ENCODE measurements at regions of chr4 and their contacts with region 1.

Region 1: DNA sequence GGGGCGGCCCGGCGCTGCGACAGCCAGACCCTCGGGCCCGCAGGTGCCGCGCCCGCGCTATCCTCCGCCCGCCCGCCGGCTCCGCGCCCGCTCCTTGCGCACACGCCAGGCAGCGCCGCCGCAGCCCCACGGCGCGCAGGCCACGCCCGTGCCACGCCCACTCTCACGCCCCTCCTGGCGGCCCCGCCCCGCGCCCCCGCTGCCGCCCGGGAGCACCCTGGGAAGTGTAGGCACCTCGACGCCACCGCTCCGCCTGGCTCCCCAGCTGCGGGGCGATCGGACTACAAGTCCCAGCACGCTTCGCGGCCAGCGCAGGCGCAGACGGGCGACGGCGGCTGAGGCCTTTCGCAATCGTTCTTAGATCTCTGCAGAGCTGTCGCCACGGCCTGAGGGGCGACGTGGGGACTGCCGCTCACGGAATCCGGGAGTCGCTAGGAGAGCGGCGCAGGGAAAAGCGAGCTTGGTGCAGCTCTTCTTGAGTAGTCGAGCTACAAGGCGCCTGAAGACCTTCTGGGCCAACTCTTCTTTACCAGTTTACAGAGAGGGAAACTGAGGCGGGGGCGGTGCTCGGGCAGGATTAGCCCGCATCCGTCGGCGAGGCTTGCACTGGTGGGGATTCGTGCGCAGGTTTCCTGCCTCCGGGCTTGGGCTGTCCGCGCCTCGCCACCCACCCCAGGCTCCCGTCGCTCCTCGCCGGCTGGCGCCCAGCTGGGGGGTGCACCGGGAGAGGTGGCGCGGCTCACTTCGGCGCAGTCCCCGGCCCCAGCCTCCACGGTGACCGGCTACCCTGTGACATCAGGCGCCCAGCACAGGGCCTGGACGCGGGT is at the start of gene ABLIM2:
- DNase-seq: peak; percentile 100
- ATAC-seq: peak; percentile 95
- H3K4me3 Mint-ChIP-seq: peak within 1 kb of the TSS; percentile 93
- H3K27ac Mint-ChIP-seq: peak within 1 kb of the TSS; percentile 83
- H3K4me1 Mint-ChIP-seq: peaks cover 52% of the 10 kb centered on the region
- H3K27me3 Mint-ChIP-seq: peaks cover 8% of the 10 kb centered on the region
- CTCF ChIP-seq: no peak
- total RNA-seq, gene ABLIM2: 5.2 and 7.0 TPM in 2 replicates

Region 2: GRCh38 chr4:8192748-8193738 is 34.1 kb after region 1 on chr4:
- CTCF ChIA-PET with region 1: interaction called, 7 read pairs
- POLR2A ChIA-PET with region 1: interaction called, 87 read pairs
- intact Hi-C with region 1: loop called (anchors 1 kb)
- DNase-seq: peak; percentile 52
- ATAC-seq: peak; percentile 99
- H3K4me3 Mint-ChIP-seq: peak overlapping the region; percentile 20
- H3K27ac Mint-ChIP-seq: peak overlapping the region; percentile 69
- H3K4me1 Mint-ChIP-seq: peaks cover 36% of the 10 kb centered on the region
- H3K27me3 Mint-ChIP-seq: peaks cover 2% of the 10 kb centered on the region
- CTCF ChIP-seq: no peak

Region 3: DNA sequence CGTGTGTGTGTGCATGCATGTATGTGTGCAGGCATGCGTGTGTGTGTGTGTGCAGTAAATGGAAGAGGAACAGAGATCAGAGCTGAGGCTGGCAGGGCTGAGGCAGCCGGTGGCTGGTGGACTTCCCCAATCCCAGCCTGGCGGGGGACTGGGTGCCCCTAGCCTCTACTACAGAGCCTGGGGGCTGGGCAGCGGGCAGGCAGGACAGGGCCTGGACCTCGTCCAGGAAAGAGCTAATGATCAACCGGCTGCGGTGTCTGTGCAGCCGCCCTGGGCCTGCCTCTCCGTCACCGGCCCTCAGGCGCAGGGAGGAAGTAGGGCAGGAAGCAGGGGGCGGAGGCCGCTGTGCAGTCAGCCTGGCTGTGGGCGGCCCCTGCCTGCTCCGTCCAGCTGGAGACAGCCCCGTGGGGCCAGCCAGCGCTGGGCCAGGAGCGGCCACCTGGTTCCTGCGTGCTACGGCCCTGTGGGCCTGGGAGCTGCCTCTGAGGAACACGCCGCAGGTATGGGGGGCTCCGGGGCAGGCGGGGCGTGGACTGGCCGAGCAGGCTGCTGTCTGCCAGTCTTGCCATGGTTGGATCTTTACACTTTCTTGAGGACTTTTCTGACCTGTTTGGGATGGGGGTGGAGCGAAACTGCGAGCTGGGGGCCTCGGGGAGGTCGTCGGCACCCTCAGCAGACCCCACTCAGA is 40.1 kb after region 1 on chr4 and contains the start of gene SH3TC1:
- CTCF ChIA-PET with region 1: no interaction called
- POLR2A ChIA-PET with region 1: interaction called, 87 read pairs
- intact Hi-C with region 1: loop called (anchors 1 kb)
- DNase-seq: peak; percentile 78
- ATAC-seq: peak; percentile 67
- H3K4me3 Mint-ChIP-seq: peak within 1 kb of the TSS; percentile 97
- H3K27ac Mint-ChIP-seq: peak within 1 kb of the TSS; percentile 96
- H3K4me1 Mint-ChIP-seq: peaks cover 63% of the 10 kb centered on the region
- H3K27me3 Mint-ChIP-seq: no peaks in the 10 kb centered on the region
- CTCF ChIP-seq: no peak
- total RNA-seq, gene SH3TC1: 104 and 135 TPM in 2 replicates

Region 4: DNA sequence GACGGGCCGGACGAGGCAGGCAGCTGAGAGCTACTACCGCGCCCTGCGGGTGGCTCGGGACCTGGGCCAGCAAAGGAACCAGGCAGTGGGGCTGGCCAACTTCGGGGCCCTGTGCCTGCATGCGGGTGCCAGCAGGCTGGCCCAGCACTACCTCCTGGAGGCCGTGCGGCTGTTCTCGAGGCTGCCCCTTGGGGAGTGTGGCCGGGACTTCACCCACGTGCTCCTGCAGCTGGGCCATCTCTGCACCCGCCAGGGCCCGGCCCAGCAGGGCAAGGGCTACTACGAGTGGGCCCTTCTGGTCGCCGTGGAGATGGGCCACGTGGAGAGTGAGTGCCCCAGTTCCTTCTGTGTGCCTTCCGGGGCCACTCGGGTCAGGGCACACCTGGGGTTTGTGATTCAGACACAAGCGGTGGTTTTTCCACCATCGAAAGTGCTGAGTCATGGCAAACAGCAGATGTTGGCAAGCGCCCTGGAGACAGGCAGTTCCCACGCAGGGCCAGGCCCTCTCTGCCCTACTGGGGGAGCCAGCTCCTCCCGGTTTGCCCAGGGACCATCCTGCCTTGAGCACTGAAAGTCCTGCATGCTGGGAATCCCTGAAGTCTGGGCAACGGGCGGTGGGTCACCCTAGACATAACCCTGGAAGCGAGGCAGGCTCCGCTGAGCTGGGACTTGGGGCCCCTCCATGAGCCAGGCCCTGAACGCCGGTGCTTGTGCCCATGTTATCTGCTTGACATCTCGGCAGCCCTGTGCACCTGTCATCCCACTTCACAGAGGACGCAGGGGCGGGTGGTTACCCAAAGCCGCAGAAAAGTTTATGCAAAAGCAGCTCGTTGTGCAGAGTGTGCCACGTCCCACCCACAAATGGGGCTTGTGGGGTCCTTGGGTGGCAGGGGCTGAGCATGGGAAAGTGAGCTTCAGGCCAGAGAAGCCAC is 69.7 kb after region 1 on chr4:
- CTCF ChIA-PET with region 1: no interaction called
- POLR2A ChIA-PET with region 1: interaction called, 19 read pairs
- intact Hi-C with region 1: loop called (anchors 2 kb)
- DNase-seq: peak; percentile 70
- ATAC-seq: peak; percentile 74
- H3K4me3 Mint-ChIP-seq: peak overlapping the region; percentile 67
- H3K27ac Mint-ChIP-seq: peak overlapping the region; percentile 89
- H3K4me1 Mint-ChIP-seq: peaks cover 45% of the 10 kb centered on the region
- H3K27me3 Mint-ChIP-seq: no peaks in the 10 kb centered on the region
- CTCF ChIP-seq: no peak

Region 5: DNA sequence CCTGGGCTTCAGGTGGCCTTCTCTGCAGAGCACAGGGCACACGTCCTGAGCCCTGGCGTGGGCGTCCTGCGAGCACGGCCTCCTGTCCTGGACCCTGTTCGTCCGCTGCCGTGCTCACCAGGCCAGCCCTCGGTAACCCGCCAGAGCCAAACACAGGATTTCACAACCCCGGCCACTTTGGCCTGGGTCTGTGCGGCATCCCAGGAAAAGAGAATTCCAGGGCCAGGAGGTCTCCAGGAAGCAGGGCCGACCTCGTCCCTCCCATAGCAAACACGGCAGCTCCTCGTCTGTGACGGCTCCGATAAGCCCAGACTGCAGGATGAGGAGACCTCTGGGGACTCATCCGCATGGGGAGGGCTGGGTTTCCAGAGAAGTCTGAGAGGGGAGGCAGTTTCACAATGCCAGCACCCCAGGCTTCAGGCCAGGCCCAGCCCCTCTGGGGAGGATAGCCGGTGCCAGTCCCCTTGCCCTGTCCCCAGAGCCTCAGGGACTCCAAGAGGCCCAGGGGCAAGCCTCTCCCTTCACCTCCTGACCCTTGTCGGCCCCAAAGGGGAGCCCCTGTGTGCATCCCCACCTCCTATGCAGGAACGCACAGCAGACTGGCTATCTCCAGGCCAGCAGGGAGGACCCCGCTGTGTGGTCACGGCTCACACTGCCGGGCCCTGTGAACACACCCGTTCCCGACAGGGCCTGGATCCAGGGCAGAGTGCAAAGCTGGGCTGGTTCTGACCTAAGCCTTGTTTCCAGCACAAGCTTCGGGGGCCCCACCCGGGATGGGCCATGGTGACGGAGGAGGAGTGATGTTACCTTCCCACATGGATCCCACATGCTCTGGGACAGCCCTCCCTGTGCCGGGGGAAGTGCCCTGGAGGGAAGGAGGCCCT is 88.4 kb after region 1 on chr4:
- CTCF ChIA-PET with region 1: no interaction called
- POLR2A ChIA-PET with region 1: no interaction called
- intact Hi-C with region 1: no loop called
- DNase-seq: no peak
- ATAC-seq: no peak
- H3K4me3 Mint-ChIP-seq: no peak overlapping the region
- H3K27ac Mint-ChIP-seq: no peak overlapping the region
- H3K4me1 Mint-ChIP-seq: peaks cover under 1% of the 10 kb centered on the region
- H3K27me3 Mint-ChIP-seq: no peaks in the 10 kb centered on the region
- CTCF ChIP-seq: no peak

Region 6: DNA sequence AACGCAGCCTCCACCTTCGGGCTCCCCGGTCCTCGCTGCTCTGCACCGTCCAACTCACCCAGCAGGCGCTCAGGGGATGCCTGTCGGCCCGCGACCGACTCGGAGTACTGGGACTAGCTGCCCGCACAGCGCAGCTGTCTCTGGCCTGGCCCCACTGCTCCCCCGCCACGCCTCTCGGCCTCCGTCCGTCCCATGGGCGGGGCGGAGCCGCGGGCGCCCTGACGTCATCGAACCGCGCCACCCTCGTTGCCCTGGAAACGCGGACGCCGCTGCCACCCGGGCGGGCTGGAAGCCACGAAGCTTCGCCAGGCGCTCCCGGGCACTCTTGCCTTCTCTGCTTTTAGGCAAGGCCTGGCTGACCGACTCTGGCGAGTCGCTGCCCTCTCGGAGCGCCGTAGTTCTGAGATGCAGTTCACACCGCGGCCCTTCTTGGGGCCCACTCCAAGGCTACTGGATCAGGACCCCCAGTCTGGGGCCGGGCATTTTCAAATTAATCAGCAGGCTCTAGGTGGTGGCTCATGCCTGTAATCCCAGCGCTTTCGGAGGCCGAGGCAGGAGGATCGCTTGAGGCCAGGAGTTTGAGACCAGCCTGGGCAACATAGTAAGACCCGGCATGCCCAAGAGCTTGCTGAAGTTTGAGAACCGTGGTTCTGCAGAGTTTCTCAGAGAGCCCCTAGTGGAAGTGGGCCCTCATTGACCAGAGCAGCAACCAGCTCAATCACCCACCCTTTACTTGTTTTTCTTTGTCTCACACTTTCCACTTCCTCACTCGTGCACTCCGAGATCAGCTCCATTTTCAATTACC is 269.6 kb after region 1 on chr4:
- CTCF ChIA-PET with region 1: no interaction called
- POLR2A ChIA-PET with region 1: interaction called, 3 read pairs
- intact Hi-C with region 1: loop called (anchors 2 kb)
- DNase-seq: peak; percentile 98
- ATAC-seq: peak; percentile 95
- H3K4me3 Mint-ChIP-seq: peak overlapping the region; percentile 95
- H3K27ac Mint-ChIP-seq: peak overlapping the region; percentile 93
- H3K4me1 Mint-ChIP-seq: peaks cover 32% of the 10 kb centered on the region
- H3K27me3 Mint-ChIP-seq: no peaks in the 10 kb centered on the region
- CTCF ChIP-seq: no peak

Region 7: DNA sequence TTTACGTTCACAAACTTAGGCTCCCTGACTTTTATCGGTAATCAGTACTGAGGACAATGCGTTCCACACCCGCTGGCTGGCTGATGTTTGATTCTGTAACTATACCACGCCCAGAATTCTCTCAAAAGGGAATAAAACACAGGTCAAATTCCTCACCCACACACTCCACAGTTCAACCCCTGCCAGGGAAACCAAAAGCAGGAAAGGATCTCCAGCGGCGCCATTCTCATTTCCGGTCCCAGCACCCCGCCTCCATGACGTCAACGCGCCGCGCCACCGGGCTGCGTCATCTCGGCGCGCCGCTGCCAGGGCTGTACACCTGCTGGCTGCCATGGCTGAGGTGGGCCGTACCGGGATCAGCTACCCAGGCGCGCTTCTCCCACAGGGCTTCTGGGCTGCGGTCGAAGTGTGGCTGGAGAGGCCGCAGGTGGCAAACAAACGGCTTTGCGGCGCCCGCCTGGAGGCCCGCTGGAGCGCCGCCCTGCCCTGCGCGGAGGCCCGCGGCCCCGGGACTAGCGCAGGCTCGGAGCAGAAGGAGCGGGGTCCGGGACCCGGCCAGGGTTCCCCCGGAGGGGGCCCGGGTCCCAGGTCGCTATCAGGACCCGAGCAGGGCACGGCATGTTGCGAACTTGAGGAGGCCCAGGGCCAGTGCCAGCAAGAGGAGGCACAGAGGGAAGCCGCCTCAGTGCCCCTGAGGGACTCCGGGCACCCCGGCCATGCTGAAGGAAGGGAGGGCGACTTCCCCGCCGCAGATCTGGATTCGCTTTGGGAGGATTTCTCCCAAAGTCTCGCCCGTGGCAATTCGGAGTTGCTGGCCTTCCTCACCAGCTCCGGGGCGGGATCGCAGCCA is 281.8 kb after region 1 on chr4 and contains the starts of genes ACOX3 and TRMT44:
- CTCF ChIA-PET with region 1: no interaction called
- POLR2A ChIA-PET with region 1: no interaction called
- intact Hi-C with region 1: loop called (anchors 1 kb)
- DNase-seq: peak; percentile 100
- ATAC-seq: peak; percentile 85
- H3K4me3 Mint-ChIP-seq: peak within 1 kb of the TSS; percentile 97
- H3K27ac Mint-ChIP-seq: peak within 1 kb of the TSS; percentile 98
- H3K4me1 Mint-ChIP-seq: peaks cover 60% of the 10 kb centered on the region
- H3K27me3 Mint-ChIP-seq: no peaks in the 10 kb centered on the region
- CTCF ChIP-seq: no peak
- total RNA-seq, gene ACOX3: 17.1 and 20.6 TPM in 2 replicates
- total RNA-seq, gene TRMT44: 29.3 and 33.8 TPM in 2 replicates